Dorsolateral prefrontal cortex (tissue), 120 donors: ENCODE measurements at regions of chr22 and their contacts with region 1.

Region 1: DNA sequence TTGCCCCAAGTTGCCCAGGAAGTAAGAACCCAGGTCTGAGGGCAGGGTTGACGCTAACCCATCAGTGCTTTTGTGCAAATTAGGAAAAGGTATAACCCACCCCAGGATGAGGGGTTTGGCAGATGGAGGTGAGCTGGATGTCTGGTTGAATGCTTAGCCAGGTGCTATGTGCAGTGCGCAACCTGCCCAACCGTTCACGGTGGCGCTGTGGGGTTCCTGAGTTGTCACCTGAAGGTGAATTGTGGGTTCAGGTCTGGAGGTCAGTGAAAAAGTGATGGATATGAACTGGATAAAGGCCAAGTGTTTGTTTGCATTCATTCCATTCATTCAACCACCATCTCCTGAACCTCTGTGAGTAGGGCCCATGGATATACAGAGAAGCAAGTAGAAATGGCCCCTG is 14.3 kb upstream of the LGALS2 start:
- DNase-seq: no peak
- H3K4me3 ChIP-seq: no peak overlapping the region
- H3K27ac ChIP-seq: no peak overlapping the region
- H3K27me3 ChIP-seq: no peaks in the 10 kb centered on the region
- CTCF ChIP-seq: no peak

Region 2: GRCh38 chr22:37316875-37317371 is 277.3 kb before region 1 on chr22:
- intact Hi-C with region 1: loop called in 1 of 2 experiments (anchors 5 kb)
- DNase-seq: peak; percentile 45 to 81 (median 73)
- H3K4me3 ChIP-seq: no peak overlapping the region
- H3K27ac ChIP-seq: no peak overlapping the region
- H3K27me3 ChIP-seq: no peaks in the 10 kb centered on the region
- CTCF ChIP-seq: peak; percentile 44 to 92 (median 83)

Region 3: DNA sequence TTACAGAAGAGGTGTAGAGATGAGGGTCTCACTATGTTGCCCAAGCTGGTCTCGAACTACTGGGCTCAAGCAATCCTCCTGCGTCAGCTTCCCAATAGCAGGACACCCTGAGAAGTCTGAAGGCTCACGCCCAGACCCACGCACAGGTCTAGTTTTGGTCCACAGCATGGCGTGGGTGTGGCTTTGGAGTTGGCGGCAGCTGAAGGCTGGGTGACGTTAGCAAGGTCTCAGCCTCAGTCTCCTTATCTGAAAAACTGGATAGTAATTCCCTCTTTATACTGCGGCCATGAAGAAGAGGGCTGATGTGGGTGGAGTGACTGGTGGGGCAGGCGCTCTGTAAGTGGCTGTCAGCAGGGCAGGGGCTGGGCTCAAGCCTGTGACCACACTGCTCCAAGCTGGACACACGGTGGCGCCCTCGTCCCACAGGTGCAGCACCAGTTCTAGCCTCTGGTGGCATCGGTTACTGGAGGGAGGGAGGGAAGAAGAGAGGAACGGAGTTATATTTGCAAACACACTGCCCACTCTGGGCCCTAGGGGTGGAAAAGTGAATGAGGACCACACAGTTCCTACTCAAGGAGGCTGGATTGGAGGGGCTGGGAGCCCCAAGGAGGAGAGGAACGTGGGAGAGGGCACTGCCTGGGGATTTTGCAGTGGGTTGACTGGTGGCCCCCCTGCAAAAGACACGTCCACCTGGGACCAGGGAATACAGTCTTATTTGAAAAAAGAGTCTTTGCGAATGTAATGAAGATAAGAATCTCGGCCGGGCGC is 55.5 kb before region 1 on chr22:
- intact Hi-C with region 1: loop called (anchors 1 to 5 kb)
- DNase-seq: peak; percentile 73 to 95 (median 93)
- H3K4me3 ChIP-seq: peak overlapping the region in 34 of 59 donors; percentile 3 to 48 (median 28)
- H3K27ac ChIP-seq: peak overlapping the region in 14 of 59 donors; percentile 2 to 74 (median 45)
- H3K27me3 ChIP-seq: no peaks in the 10 kb centered on the region
- CTCF ChIP-seq: peak; percentile 73 to 99 (median 95)

Region 4: DNA sequence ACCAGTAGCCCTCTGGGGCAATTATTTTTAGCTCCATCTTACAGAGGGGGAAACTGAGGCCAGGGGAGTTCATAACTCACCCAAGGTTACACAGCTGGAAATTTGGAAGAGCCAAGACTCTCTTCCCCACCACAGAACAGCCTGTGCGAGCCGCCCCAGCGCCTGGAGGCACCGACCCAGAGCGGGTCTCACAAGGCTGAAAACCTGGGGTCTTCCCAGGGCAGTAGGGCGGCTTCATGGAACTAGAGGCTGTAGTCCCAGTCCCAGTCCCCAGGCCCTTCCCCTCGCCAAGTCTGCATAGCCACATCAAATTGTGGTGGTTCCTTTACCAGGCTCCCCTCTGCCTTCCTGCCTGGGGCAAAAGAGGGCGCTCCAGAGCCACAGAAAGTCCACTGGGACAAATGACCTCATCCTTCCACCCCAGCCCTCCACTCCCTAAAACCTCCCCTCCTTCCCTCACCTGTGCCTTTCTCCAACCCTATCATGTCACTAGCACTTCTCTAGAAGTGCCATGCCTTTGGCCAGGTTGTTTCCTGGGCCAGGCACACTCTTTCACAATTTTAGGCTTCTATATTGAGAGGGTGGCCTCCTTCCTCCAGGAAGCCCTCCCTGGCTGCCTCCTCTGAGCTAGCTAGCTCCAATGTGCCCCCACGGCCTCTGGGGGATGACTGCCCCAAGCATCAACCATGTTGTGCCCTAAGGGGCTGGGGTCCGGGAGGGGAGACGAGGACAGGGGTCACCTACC is 49.1 kb before region 1 on chr22:
- intact Hi-C with region 1: loop called in 1 of 2 experiments (anchors 5 kb)
- DNase-seq: peak in 4 of 10 donors; percentile 49 to 73 (median 62)
- H3K4me3 ChIP-seq: peak overlapping the region in 10 of 59 donors; percentile 3 to 26 (median 16)
- H3K27ac ChIP-seq: peak overlapping the region; percentile 60 to 98 (median 95)
- H3K27me3 ChIP-seq: peaks cover 0 to 6% (median 0%) of the 10 kb centered on the region in 45 donors
- CTCF ChIP-seq: peak; percentile 12 to 79 (median 62)

Region 5: DNA sequence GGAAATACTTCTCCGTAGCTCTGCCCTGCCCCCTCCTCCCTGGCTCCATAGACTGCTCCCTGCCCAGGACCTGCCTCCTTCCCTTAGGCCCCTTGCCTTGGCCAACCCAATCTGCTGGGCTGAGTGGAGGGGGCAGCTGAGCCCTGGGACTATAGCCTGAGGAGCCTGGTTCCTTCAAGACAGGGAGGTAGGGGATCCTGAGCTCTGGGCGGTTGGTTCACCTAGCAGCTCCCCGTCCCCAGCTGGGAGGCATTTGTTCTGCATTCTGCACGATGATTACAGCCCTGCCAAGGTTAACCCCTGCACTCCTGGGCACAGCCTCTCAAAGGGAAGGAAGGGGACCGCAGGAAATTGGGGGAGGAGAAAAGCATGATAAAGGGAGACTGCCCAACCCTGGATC is 37.5 kb before region 1 on chr22:
- intact Hi-C with region 1: no loop called
- DNase-seq: no peak
- H3K4me3 ChIP-seq: no peak overlapping the region
- H3K27ac ChIP-seq: peak overlapping the region in 14 of 59 donors; percentile 0 to 99 (median 40)
- H3K27me3 ChIP-seq: peaks cover 0 to 13% (median 0%) of the 10 kb centered on the region in 45 donors
- CTCF ChIP-seq: no peak

Region 6: DNA sequence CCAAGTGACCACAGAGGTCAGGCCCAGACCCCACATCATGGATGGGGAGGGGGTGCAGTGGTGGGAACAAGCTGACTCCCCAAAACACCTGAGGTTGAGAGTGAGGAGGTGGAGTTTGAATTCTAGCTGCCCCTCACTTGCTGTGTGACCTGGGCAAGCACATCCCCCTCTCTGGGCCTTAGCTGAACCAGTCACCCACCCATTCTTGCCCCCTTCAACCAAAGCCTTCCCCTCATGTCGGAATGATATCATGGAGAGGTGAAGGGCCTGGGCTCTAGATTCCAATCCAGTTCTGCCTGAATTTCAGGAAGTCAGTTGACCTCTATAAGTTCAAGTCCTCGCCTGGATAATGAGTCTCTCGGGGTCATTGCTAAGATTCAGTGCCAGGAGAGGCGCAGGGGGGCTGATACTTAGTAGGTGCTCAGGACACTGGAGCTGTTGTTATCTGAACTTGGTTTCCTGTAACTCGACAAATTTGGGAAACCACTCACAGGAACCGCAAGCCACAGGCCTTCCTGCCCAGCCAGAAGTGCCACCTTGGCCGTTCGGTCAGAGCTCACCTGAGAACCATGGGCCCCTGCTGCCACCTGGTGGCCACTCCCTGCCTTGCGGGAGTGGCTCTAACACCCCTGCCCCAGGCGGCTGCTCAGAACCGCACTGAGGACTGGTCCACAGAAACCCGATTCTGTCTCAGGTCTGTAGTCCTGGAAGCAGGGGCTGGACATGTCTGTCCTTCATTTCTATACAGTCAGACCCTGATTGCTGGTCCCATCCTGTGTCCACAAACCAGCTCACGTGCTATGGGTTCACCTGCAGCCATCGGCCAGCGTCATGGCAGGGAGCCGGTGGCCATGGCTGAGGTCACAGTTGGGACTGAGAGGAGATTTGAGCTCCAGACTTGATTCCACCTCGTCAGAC is 27.1 kb before region 1 on chr22:
- intact Hi-C with region 1: loop called in 1 of 2 experiments (anchors 2 kb)
- DNase-seq: peak; percentile 73 to 85 (median 78)
- H3K4me3 ChIP-seq: peak overlapping the region in 19 of 59 donors; percentile 3 to 88 (median 33)
- H3K27ac ChIP-seq: peak overlapping the region; percentile 42 to 100 (median 98)
- H3K27me3 ChIP-seq: peaks cover 0 to 5% (median 0%) of the 10 kb centered on the region in 45 donors
- CTCF ChIP-seq: peak; percentile 76 to 98 (median 94)

Region 7: GRCh38 chr22:37676736-37677492 is 82.7 kb after region 1 on chr22:
- intact Hi-C with region 1: no loop called
- DNase-seq: peak in 8 of 10 donors; percentile 28 to 83 (median 64)
- H3K4me3 ChIP-seq: peak overlapping the region; percentile 23 to 74 (median 57)
- H3K27ac ChIP-seq: peak overlapping the region; percentile 48 to 97 (median 90)
- H3K27me3 ChIP-seq: no peaks in the 10 kb centered on the region
- CTCF ChIP-seq: no peak